ENCODE measurements at regions of chr11 and their contacts with region 1.

Region 1: GRCh38 chr11:123268118-123268517 is 73.1 kb upstream of the CLMP start:
- DNase-seq: no peak
- H3K4me3 ChIP-seq: no peak overlapping the region
- H3K27ac ChIP-seq: no peak overlapping the region
- H3K27me3 ChIP-seq: peaks cover 18% of the 10 kb centered on the region
- CTCF ChIP-seq: no peak

Region 2: GRCh38 chr11:123072332-123072761 is 195.8 kb before region 1 on chr11:
- CTCF ChIA-PET with region 1: no interaction called
- POLR2A ChIA-PET with region 1: no interaction called
- DNase-seq: no peak
- H3K4me3 ChIP-seq: no peak overlapping the region
- H3K27ac ChIP-seq: no peak overlapping the region
- H3K27me3 ChIP-seq: no peaks in the 10 kb centered on the region
- CTCF ChIP-seq: no peak

Region 3: GRCh38 chr11:123103326-123103980 is 164.7 kb before region 1 on chr11:
- CTCF ChIA-PET with region 1: interaction called, 134 read pairs
- POLR2A ChIA-PET with region 1: no interaction called
- DNase-seq: peak; percentile 34
- H3K4me3 ChIP-seq: no peak overlapping the region
- H3K27ac ChIP-seq: no peak overlapping the region
- H3K27me3 ChIP-seq: no peaks in the 10 kb centered on the region
- CTCF ChIP-seq: peak; percentile 64

Region 4: GRCh38 chr11:123110356-123110755 is 157.8 kb before region 1 on chr11:
- CTCF ChIA-PET with region 1: interaction called, 11 read pairs
- POLR2A ChIA-PET with region 1: no interaction called
- DNase-seq: no peak
- H3K4me3 ChIP-seq: no peak overlapping the region
- H3K27ac ChIP-seq: no peak overlapping the region
- H3K27me3 ChIP-seq: no peaks in the 10 kb centered on the region
- CTCF ChIP-seq: no peak

Region 5: DNA sequence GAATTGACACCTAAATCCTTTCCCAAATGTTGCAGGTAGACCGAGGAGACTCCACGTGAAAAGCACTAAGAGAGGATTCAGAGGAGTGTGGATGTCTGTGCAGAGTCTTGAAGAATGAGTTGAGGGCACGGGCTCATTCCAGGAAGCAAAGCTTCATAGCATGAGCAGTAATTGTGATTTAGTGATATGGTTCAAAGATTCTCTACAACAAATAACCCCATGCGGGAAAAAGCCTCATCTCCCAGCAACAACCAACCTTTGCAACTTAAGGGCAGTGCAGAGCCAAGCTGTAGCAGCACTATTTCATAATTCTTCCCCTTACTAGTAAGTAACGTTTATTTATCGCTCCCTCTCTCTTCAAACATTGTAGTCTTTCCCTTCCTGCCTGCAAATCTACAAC is 14.5 kb after region 1 on chr11:
- CTCF ChIA-PET with region 1: interaction called, 13 read pairs
- POLR2A ChIA-PET with region 1: no interaction called
- DNase-seq: no peak
- H3K4me3 ChIP-seq: no peak overlapping the region
- H3K27ac ChIP-seq: no peak overlapping the region
- H3K27me3 ChIP-seq: peaks cover 27% of the 10 kb centered on the region
- CTCF ChIP-seq: no peak